B cell (primary cell): ENCODE measurements at regions of chr15 and their contacts with region 1.

Region 1: GRCh38 chr15:85330901-85331588 is 49.4 kb upstream of the AKAP13 start:
- DNase-seq: peak; percentile 82
- ATAC-seq: peak; percentile 39
- H3K4me3 ChIP-seq: peak overlapping the region in 4 of 5 experiments; percentile 49 to 81 (median 58)
- H3K4me3 Mint-ChIP-seq: peak overlapping the region; percentile 97
- H3K27ac ChIP-seq: peak overlapping the region; percentile 92 to 96
- H3K27ac Mint-ChIP-seq: peak overlapping the region; percentile 100
- H3K4me1 ChIP-seq: peaks cover 62 to 69% of the 10 kb centered on the region in 2 donors
- H3K4me1 Mint-ChIP-seq: peaks cover 66% of the 10 kb centered on the region
- H3K27me3 ChIP-seq: no peaks in the 10 kb centered on the region
- H3K27me3 Mint-ChIP-seq: no peaks in the 10 kb centered on the region
- CTCF ChIP-seq: peak; percentile 50

Region 2: DNA sequence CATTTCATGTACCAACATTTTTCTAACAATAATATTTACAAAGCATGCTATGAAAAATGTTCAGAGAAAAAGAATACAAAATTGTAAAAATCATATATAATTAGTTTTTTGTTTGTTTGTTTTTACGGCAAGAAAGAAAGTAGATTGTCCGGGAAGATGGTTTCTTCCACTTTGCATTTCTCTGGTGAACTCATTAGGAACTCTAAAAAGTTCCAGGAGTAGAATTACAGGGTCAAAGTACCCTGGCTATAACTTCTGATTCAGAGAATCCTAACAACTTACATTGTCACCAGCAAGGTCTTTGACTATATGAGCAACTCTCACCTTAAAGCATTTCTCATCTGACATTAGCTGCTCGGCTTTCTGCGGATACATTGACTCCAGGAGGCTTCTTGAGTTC is 152.7 kb before region 1 on chr15:
- CTCF ChIA-PET with region 1: no interaction called
- POLR2A ChIA-PET with region 1: no interaction called
- intact Hi-C with region 1: no loop called
- DNase-seq: no peak
- ATAC-seq: no peak
- H3K4me3 ChIP-seq: no peak overlapping the region
- H3K4me3 Mint-ChIP-seq: no peak overlapping the region
- H3K27ac ChIP-seq: no peak overlapping the region
- H3K27ac Mint-ChIP-seq: no peak overlapping the region
- H3K4me1 ChIP-seq: no peaks in the 10 kb centered on the region
- H3K4me1 Mint-ChIP-seq: no peaks in the 10 kb centered on the region
- H3K27me3 ChIP-seq: no peaks in the 10 kb centered on the region
- H3K27me3 Mint-ChIP-seq: peaks cover 15% of the 10 kb centered on the region
- CTCF ChIP-seq: no peak

Region 3: GRCh38 chr15:85296615-85297402 is 34.2 kb before region 1 on chr15:
- CTCF ChIA-PET with region 1: interaction called, 102 read pairs
- POLR2A ChIA-PET with region 1: interaction called, 6 read pairs
- intact Hi-C with region 1: loop called (anchors 1 kb)
- DNase-seq: peak; percentile 87
- ATAC-seq: peak; percentile 99
- H3K4me3 ChIP-seq: peak overlapping the region in 3 of 5 experiments; percentile 34 to 50 (median 40)
- H3K4me3 Mint-ChIP-seq: peak overlapping the region; percentile 85
- H3K27ac ChIP-seq: no peak overlapping the region
- H3K27ac Mint-ChIP-seq: peak overlapping the region; percentile 81
- H3K4me1 ChIP-seq: peaks cover 8 to 17% of the 10 kb centered on the region in 2 donors
- H3K4me1 Mint-ChIP-seq: peaks cover 20% of the 10 kb centered on the region
- H3K27me3 ChIP-seq: no peaks in the 10 kb centered on the region
- H3K27me3 Mint-ChIP-seq: no peaks in the 10 kb centered on the region
- CTCF ChIP-seq: peak; percentile 84

Region 4: DNA sequence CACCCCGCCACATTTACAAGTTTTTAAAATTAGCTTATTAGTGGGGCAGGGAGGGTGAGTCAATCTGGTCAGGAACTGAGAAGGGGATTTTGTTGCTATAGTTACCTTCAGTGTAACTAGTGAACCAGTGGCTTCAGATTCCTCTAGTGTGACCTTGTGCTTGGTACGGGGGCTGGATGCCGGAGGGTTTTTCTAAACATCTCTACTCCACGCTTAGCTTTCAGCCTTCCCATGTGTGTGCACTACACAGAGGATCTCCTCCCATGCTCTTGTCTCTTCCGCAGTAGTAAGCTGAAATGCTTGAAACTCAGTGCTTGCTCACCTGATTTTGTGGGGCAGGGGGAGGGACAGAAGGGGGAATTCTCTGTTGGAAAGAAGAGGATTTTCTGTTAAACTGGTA is 18.6 kb before region 1 on chr15:
- CTCF ChIA-PET with region 1: interaction called, 195 read pairs
- POLR2A ChIA-PET with region 1: interaction called, 49 read pairs
- intact Hi-C with region 1: loop called (anchors 1 kb)
- DNase-seq: peak; percentile 86
- ATAC-seq: peak; percentile 84
- H3K4me3 ChIP-seq: peak overlapping the region in 4 of 5 experiments; percentile 28 to 59 (median 51)
- H3K4me3 Mint-ChIP-seq: peak overlapping the region; percentile 89
- H3K27ac ChIP-seq: peak overlapping the region; percentile 87 to 97
- H3K27ac Mint-ChIP-seq: peak overlapping the region; percentile 95
- H3K4me1 ChIP-seq: peaks cover 56 to 63% of the 10 kb centered on the region in 2 donors
- H3K4me1 Mint-ChIP-seq: peaks cover 87% of the 10 kb centered on the region
- H3K27me3 ChIP-seq: no peaks in the 10 kb centered on the region
- H3K27me3 Mint-ChIP-seq: no peaks in the 10 kb centered on the region
- CTCF ChIP-seq: no peak

Region 5: DNA sequence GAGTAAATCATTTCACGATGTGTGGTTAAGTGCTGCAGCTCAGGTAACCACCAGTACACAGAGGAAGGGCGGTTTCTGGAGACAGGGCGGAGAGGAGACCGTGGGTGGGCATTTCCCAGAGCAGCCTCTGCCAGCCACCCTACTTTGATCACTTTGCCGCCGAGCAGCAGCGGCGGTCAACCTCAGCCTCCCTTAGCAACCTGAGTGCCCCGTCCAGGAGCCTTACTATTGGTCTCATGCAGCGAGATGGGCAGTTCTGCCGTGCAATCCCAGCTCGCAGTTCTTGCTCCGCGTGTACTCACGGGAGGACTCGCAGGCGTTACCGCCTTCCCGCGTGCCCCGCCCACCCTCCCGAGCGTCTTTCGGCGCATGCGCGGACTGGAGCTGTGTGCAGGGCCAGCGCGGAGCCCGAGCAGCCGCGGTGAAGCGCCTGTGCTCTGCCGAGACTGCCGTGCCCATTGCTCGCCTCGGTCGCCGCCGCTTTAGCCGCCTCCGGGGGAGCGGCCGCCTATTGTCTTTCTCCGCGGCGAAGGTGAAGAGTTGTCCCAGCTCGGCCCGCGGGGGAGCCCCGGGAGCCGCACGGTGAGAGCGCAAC is 49.3 kb after region 1 on chr15 and contains the start of gene AKAP13:
- CTCF ChIA-PET with region 1: interaction called, 22 read pairs
- POLR2A ChIA-PET with region 1: interaction called, 26 read pairs
- intact Hi-C with region 1: loop called (anchors 1 kb)
- DNase-seq: peak; percentile 97
- ATAC-seq: peak; percentile 78
- H3K4me3 ChIP-seq: peak within 1 kb of the TSS; percentile 65 to 90 (median 69)
- H3K4me3 Mint-ChIP-seq: peak within 1 kb of the TSS; percentile 86
- H3K27ac ChIP-seq: peak within 1 kb of the TSS; percentile 79 to 85
- H3K27ac Mint-ChIP-seq: peak within 1 kb of the TSS; percentile 90
- H3K4me1 ChIP-seq: peaks cover 35 to 42% of the 10 kb centered on the region in 2 donors
- H3K4me1 Mint-ChIP-seq: peaks cover 44% of the 10 kb centered on the region
- H3K27me3 ChIP-seq: peaks cover 0 to 4% (median 0%) of the 10 kb centered on the region in 4 experiments
- H3K27me3 Mint-ChIP-seq: peaks cover 4% of the 10 kb centered on the region
- CTCF ChIP-seq: no peak
- total RNA-seq, gene AKAP13: 358 and 380 TPM in 2 replicates

Region 6: DNA sequence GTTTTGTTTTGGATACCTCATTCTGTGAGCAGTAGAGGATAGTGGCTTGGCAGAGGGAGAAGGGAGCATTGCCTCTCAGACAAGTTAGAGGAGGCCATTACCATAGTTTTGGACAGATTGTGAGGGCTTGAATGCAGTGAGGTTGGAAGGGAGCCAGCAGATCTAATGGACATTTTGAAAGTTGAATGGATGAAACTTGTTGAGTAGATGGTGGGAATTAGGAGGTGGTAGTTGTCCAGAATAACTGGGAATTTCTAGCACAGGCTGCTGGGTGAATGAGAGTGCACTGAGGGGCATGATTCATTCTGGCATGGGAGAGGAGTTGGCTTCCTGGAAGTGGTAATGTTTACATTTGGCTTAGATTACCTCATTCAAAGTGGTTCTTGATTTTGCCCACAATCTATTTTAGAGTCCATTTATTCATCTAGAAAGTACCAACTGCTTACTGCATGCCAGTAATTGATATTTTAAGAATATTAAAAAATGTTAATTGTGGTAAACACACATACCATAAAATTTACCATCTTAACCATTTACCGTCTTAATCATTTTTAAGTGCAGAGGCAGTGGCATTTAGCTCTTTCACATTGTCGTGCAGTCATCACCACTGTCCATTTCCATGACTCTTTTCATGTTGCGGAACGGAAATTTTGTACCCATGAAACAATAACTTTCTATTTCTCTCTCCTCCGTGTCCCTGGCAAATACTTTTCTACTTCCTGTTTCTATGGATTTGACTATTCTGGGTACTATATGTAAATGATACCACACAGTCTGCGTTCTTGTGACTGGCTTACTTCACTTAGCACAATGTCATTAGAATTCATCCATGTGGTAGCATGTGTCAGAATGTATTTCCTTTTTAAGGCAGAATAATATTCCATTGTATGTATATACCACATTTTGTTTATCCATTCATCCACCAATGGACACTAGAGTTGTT is 77.0 kb after region 1 on chr15:
- CTCF ChIA-PET with region 1: interaction called, 231 read pairs
- POLR2A ChIA-PET with region 1: interaction called, 9 read pairs
- intact Hi-C with region 1: loop called (anchors 1 kb)
- DNase-seq: peak; percentile 81
- ATAC-seq: peak; percentile 65
- H3K4me3 ChIP-seq: peak overlapping the region in 4 of 5 experiments; percentile 2 to 57 (median 35)
- H3K4me3 Mint-ChIP-seq: peak overlapping the region; percentile 84
- H3K27ac ChIP-seq: peak overlapping the region; percentile 83 to 88
- H3K27ac Mint-ChIP-seq: peak overlapping the region; percentile 96
- H3K4me1 ChIP-seq: peaks cover 87 to 90% of the 10 kb centered on the region in 2 donors
- H3K4me1 Mint-ChIP-seq: peaks cover 80% of the 10 kb centered on the region
- H3K27me3 ChIP-seq: no peaks in the 10 kb centered on the region
- H3K27me3 Mint-ChIP-seq: no peaks in the 10 kb centered on the region
- CTCF ChIP-seq: no peak

Region 7: GRCh38 chr15:85485956-85486567 is 155.0 kb after region 1 on chr15:
- CTCF ChIA-PET with region 1: interaction called, 7 read pairs
- POLR2A ChIA-PET with region 1: no interaction called
- intact Hi-C with region 1: loop called (anchors 1 kb)
- DNase-seq: peak; percentile 83
- ATAC-seq: peak; percentile 91
- H3K4me3 ChIP-seq: no peak overlapping the region
- H3K4me3 Mint-ChIP-seq: no peak overlapping the region
- H3K27ac ChIP-seq: no peak overlapping the region
- H3K27ac Mint-ChIP-seq: peak overlapping the region; percentile 54
- H3K4me1 ChIP-seq: peaks cover 41 to 47% of the 10 kb centered on the region in 2 donors
- H3K4me1 Mint-ChIP-seq: peaks cover 74% of the 10 kb centered on the region
- H3K27me3 ChIP-seq: no peaks in the 10 kb centered on the region
- H3K27me3 Mint-ChIP-seq: no peaks in the 10 kb centered on the region
- CTCF ChIP-seq: peak; percentile 95

Region 8: DNA sequence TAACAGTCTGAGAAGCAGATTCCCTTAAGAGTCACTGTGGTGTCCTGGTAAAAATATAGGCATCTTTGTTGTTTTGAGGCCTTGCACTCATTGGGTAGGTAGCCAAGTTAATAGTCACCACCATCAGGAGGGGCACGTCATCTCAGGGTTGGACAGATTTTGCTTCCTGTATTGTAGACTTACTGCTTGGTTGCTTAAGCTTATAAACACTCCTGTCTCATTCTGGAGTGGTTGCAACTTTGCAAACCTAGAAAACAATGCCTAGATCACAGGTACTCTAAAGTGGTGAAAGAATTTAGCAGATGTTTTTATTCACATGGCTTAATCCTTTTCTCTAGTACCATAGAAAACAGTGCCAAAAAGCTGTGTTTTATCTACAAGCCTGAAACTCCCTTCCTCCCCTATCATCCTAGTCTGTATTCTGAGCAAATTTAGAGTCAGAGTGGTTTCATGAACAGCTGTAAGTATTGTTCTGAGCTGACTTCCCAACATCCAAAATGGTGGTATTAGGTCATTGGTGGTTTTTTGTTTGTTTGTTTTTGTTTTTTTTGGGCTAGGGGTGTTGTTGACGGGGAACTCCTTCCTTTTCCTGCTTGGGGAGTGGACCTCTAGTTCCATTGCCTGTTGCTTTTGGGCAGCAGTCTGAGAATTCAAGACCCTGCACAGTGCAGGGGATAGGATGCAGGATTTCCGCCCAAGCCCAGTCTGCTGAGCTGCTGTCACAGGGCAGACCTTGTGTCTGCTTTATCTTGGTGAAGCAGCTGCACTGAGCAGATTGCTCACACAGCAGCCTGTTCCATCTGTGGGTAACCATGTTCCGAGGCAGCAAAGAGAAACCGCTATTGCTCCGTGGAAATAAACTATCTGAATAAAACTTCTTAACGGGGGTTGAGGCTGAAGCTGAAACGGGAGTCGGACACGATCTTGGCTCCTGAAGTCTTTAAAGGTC is 251.4 kb after region 1 on chr15:
- CTCF ChIA-PET with region 1: interaction called, 3 read pairs
- POLR2A ChIA-PET with region 1: no interaction called
- intact Hi-C with region 1: loop called (anchors 2 kb)
- DNase-seq: peak; percentile 78
- ATAC-seq: peak; percentile 65
- H3K4me3 ChIP-seq: peak overlapping the region; percentile 1 to 42 (median 34)
- H3K4me3 Mint-ChIP-seq: peak overlapping the region; percentile 85
- H3K27ac ChIP-seq: peak overlapping the region; percentile 84 to 94
- H3K27ac Mint-ChIP-seq: peak overlapping the region; percentile 94
- H3K4me1 ChIP-seq: peaks cover 55 to 58% of the 10 kb centered on the region in 2 donors
- H3K4me1 Mint-ChIP-seq: peaks cover 67% of the 10 kb centered on the region
- H3K27me3 ChIP-seq: no peaks in the 10 kb centered on the region
- H3K27me3 Mint-ChIP-seq: no peaks in the 10 kb centered on the region
- CTCF ChIP-seq: no peak